PC-9 (cell line): ENCODE measurements at regions of chr13 and their contacts with region 1.

Region 1: DNA sequence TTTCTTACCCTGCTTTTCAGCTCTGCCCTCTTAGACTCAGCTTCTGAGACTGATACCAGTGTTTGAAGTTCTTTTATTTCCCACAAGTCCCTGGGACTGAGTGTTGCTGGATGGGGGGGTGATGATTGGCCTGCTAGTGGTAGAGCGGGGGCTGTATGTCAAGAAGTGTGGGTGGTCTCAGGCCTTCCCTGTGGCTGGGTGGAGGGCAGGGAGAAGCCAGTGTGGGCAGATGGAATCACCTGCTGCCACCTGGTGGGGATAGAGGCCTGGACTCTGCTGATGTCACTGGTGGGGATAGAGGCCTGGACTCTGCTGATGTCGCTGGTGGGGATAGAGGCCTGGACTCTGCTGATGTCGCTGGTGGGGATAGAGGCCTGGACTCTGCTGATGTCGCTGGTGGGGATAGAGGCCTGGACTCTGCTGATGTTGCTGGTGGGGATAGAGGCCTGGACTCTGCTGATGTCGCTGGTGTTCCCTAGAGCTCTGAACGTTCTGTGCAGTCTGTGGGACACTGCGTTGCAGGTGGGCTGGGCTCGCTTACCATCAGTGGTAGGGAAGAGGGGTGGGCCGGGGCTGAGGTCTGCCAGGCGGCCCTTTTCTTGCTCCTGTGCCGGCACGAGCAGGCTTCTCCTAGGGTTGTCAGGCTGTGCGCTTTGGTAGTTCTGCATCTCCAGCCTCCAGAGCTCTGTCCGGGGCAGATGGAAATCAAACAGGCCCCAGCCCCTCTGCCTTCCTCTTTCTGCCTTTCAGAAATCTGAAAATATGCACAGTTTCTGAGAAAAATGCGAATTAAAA is 101.3 kb downstream of the ARHGEF7 start:
- DNase-seq: peak in 1 of 2 experiments; percentile 26
- H3K4me3 ChIP-seq: no peak overlapping the region
- H3K27ac ChIP-seq: no peak overlapping the region
- H3K4me1 ChIP-seq: no peaks in the 10 kb centered on the region
- H3K27me3 ChIP-seq: no peaks in the 10 kb centered on the region
- CTCF ChIP-seq: peak; percentile 67; the same call in 1 of the 2 replicates

Region 2: DNA sequence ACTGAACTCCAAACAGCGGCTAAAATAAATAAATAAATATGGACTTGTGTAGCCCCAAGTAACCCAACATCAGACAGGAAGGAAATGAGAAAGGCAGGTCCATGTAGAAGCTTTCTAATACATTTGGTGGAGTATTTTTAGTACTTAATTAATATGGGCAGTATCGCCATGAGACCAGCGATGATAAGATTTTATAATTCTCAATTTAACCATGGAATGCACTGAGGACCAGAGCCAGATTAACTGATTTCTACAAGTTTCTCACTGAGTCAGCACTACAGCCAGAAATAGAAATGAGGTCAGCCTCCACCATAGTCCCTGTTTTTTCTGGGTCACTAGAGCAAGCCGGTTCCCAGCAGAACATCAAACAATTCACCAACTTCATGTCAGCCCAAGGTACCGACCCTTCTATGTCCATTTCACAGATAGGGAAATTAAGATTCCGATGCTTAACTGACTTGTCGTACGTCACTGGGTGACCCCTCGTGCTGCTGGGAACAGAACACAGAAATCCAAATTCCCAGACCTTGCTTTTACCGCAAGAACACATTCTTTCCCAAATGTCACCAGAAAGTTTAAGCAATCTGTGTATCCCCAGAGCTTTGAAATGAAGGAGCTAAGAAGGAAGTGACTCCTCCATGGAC is 999.8 kb before region 1 on chr13:
- CTCF ChIA-PET with region 1: no interaction called
- POLR2A ChIA-PET with region 1: no interaction called
- intact Hi-C with region 1: loop called (anchors 5 kb)
- DNase-seq: peak in 1 of 2 experiments; percentile 34
- H3K4me3 ChIP-seq: no peak overlapping the region
- H3K27ac ChIP-seq: no peak overlapping the region
- H3K4me1 ChIP-seq: no peaks in the 10 kb centered on the region
- H3K27me3 ChIP-seq: no peaks in the 10 kb centered on the region
- CTCF ChIP-seq: no peak

Region 3: GRCh38 chr13:111011899-111012298 is 204.5 kb before region 1 on chr13:
- CTCF ChIA-PET with region 1: no interaction called
- POLR2A ChIA-PET with region 1: no interaction called
- intact Hi-C with region 1: no loop called
- DNase-seq: no peak
- H3K4me3 ChIP-seq: no peak overlapping the region
- H3K27ac ChIP-seq: no peak overlapping the region
- H3K4me1 ChIP-seq: no peaks in the 10 kb centered on the region
- H3K27me3 ChIP-seq: no peaks in the 10 kb centered on the region
- CTCF ChIP-seq: no peak

Region 4: DNA sequence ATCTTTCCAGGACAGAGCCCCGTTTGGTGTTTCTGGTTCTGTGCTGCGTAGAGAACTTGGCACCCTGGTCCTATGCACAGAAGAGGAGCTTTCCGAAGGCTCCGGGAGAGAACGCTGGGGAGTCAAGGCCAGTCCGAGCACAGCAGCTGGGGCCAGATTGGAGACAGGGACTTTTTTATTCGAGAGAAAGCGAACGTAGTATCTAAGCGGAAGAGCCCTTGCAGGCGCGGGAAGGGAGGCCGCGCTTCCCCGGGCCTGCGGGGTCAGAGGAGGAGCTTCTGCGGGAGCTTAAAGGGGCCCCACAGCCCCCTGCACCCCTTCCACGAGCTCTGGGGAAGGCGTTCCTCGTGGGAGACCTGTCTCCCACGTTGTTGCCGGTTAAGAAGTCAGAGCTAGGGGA is 149.8 kb before region 1 on chr13:
- CTCF ChIA-PET with region 1: interaction called, 32 read pairs
- POLR2A ChIA-PET with region 1: no interaction called
- intact Hi-C with region 1: no loop called
- DNase-seq: no peak
- H3K4me3 ChIP-seq: no peak overlapping the region; the same call in 1 of the 2 replicates
- H3K27ac ChIP-seq: no peak overlapping the region
- H3K4me1 ChIP-seq: no peaks in the 10 kb centered on the region
- H3K27me3 ChIP-seq: peaks cover 26% of the 10 kb centered on the region; the same call in 1 of the 2 replicates
- CTCF ChIP-seq: no peak

Region 5: DNA sequence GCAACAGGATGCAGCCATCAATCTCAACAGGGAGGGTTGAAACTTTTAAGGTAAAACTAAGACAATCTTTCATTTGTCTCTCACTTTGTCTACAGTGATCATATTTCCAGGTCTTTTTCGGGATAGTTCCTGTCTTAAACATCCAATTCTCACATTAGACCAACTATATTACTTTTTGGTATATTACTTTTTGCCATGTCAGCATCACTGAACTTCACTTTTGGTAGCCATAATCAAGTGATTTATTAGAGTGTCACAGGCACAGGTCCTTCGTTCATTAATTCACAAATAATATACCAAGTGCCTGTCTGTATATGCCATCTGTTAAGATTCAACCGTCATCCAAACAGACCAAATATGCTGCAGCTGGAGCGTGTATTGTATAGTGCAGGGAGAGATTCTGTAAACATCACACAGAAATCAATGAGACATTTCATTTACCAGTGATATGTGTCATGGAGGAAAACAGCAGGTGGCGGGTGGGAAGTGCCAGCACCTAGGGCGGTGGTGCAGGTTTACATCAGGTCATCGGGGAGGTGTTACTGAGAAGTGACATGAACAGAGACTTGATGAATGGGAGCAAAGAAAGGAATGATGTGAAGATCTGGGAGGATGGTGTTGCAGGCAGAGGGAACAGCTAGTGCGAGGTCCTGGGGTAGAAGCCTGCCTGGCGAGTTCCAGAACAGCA is 76.3 kb before region 1 on chr13:
- CTCF ChIA-PET with region 1: no interaction called
- POLR2A ChIA-PET with region 1: no interaction called
- intact Hi-C with region 1: no loop called
- DNase-seq: no peak
- H3K4me3 ChIP-seq: no peak overlapping the region
- H3K27ac ChIP-seq: no peak overlapping the region
- H3K4me1 ChIP-seq: no peaks in the 10 kb centered on the region
- H3K27me3 ChIP-seq: peaks cover 84% of the 10 kb centered on the region
- CTCF ChIP-seq: no peak

Region 6: GRCh38 chr13:111153279-111153976 is 62.9 kb before region 1 on chr13:
- CTCF ChIA-PET with region 1: no interaction called
- POLR2A ChIA-PET with region 1: no interaction called
- intact Hi-C with region 1: loop called (anchors 5 kb)
- DNase-seq: peak; percentile 83 to 87
- H3K4me3 ChIP-seq: peak overlapping the region; percentile 89
- H3K27ac ChIP-seq: peak overlapping the region; percentile 79
- H3K4me1 ChIP-seq: peaks cover 17% of the 10 kb centered on the region
- H3K27me3 ChIP-seq: peaks cover 22% of the 10 kb centered on the region
- CTCF ChIP-seq: no peak